ENCODE measurements at regions of chr6 and their contacts with region 1.

Region 1: DNA sequence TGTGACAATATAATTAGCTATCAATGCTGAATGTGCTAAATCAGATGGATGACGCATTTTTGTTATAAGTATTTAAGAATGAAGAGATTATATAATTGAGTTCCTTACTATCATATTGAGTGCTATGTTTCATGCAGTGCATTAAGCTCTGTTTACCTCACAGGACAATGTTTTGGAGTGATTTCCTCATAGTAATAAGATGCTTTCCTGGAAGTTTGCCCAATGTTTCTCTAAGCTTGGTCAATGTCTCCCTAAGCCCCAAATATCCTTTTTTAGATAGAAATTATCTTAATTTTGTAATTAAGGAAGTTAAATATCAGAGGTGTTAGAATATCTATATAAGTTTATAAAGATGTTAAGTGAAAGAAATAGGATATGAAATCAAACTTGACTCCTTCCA is 489.6 kb downstream of the MMUT start:
- DNase-seq: no peak
- ATAC-seq: no peak
- H3K4me3 ChIP-seq: no peak overlapping the region
- H3K27ac ChIP-seq: no peak overlapping the region
- H3K4me1 ChIP-seq: no peaks in the 10 kb centered on the region
- H3K27me3 ChIP-seq: no peaks in the 10 kb centered on the region
- CTCF ChIP-seq: no peak
- EP300 ChIP-seq: no peak
- POLR2A ChIP-seq: no peak
- RAD21 ChIP-seq: no peak

Region 2: DNA sequence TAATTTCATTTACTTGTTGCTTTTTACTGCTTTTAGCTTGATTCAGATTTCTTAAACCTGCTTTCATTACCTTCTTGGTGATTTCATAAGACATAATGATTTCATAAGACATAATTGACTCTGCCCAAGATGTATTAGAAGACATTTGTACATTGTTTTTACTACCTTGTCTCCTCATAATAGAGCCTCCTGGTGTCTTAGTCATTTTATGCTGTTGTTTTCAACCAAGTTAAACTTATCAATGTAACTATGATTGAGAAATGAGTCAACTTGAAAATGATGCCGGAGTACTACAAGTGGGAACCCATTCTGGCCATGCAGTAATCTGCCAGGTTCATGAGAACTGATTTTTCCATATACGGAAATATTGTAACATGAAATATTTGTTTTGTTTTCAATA is 84.1 kb before region 1 on chr6:
- CTCF ChIA-PET with region 1: no interaction called
- POLR2A ChIA-PET with region 1: no interaction called
- RAD21 ChIA-PET with region 1: no interaction called
- SMC1A ChIA-PET with region 1: no interaction called
- in situ Hi-C with region 1: no loop called
- intact Hi-C with region 1: no loop called
- DNase-seq: no peak
- ATAC-seq: no peak
- H3K4me3 ChIP-seq: no peak overlapping the region
- H3K27ac ChIP-seq: no peak overlapping the region
- H3K4me1 ChIP-seq: no peaks in the 10 kb centered on the region
- H3K27me3 ChIP-seq: no peaks in the 10 kb centered on the region
- CTCF ChIP-seq: no peak
- EP300 ChIP-seq: no peak
- POLR2A ChIP-seq: no peak
- RAD21 ChIP-seq: no peak

Region 3: DNA sequence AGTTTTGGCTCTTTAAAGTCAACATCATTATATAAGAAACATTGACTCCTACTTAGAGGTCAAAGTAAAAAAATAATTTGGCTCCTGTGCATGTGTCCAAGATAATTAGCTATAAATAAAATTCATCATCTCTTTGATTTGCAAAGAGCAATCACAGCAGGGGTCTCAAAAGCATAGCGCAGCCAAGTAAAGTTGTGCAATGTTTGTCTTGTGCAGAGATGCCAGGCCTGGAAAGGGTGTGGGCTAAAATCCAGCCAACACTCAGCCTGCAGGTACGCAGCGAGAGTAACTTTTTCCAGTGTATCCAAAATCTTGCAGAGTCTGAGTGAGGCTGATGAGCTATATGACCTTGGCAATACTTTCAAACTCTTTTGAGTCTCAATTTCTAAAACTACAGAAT is 11.4 kb before region 1 on chr6:
- CTCF ChIA-PET with region 1: interaction called, 4 read pairs
- POLR2A ChIA-PET with region 1: no interaction called
- RAD21 ChIA-PET with region 1: no interaction called
- SMC1A ChIA-PET with region 1: interaction called, 3 read pairs
- in situ Hi-C with region 1: no loop called
- intact Hi-C with region 1: loop called (anchors 1 kb)
- DNase-seq: no peak
- ATAC-seq: no peak
- H3K4me3 ChIP-seq: no peak overlapping the region
- H3K27ac ChIP-seq: no peak overlapping the region
- H3K4me1 ChIP-seq: no peaks in the 10 kb centered on the region
- H3K27me3 ChIP-seq: no peaks in the 10 kb centered on the region
- CTCF ChIP-seq: no peak
- EP300 ChIP-seq: no peak
- POLR2A ChIP-seq: no peak
- RAD21 ChIP-seq: no peak

Region 4: GRCh38 chr6:49299279-49299678 is 325.8 kb after region 1 on chr6:
- CTCF ChIA-PET with region 1: no interaction called
- POLR2A ChIA-PET with region 1: no interaction called
- RAD21 ChIA-PET with region 1: no interaction called
- SMC1A ChIA-PET with region 1: no interaction called
- in situ Hi-C with region 1: no loop called
- intact Hi-C with region 1: no loop called
- DNase-seq: no peak
- ATAC-seq: no peak
- H3K4me3 ChIP-seq: no peak overlapping the region
- H3K27ac ChIP-seq: no peak overlapping the region
- H3K4me1 ChIP-seq: no peaks in the 10 kb centered on the region
- H3K27me3 ChIP-seq: no peaks in the 10 kb centered on the region
- CTCF ChIP-seq: no peak
- EP300 ChIP-seq: no peak
- POLR2A ChIP-seq: no peak
- RAD21 ChIP-seq: no peak

Region 5: GRCh38 chr6:49849213-49849907 is 875.9 kb after region 1 on chr6:
- CTCF ChIA-PET with region 1: no interaction called
- POLR2A ChIA-PET with region 1: no interaction called
- RAD21 ChIA-PET with region 1: no interaction called
- SMC1A ChIA-PET with region 1: no interaction called
- in situ Hi-C with region 1: no loop called
- intact Hi-C with region 1: no loop called
- DNase-seq: no peak
- ATAC-seq: peak; percentile 90
- H3K4me3 ChIP-seq: no peak overlapping the region
- H3K27ac ChIP-seq: no peak overlapping the region
- H3K4me1 ChIP-seq: no peaks in the 10 kb centered on the region
- H3K27me3 ChIP-seq: no peaks in the 10 kb centered on the region
- CTCF ChIP-seq: peak in 2 of 3 experiments; percentile 39 to 55; a peak in 5 of 6 replicates
- EP300 ChIP-seq: no peak
- POLR2A ChIP-seq: no peak
- RAD21 ChIP-seq: peak; percentile 61